ENCODE measurements at regions of chr5 and their contacts with region 1.

Region 1: GRCh38 chr5:172984243-172984953 is 827 bp downstream of the ATP6V0E1 start:
- DNase-seq: peak; percentile 78 to 79
- H3K4me3 ChIP-seq: peak overlapping the region; percentile 94
- H3K4me3 Mint-ChIP-seq: peak overlapping the region; percentile 87
- H3K27ac Mint-ChIP-seq: peak overlapping the region; percentile 95
- H3K4me1 ChIP-seq: peaks cover 11% of the 10 kb centered on the region
- H3K4me1 Mint-ChIP-seq: peaks cover 7% of the 10 kb centered on the region
- H3K27me3 ChIP-seq: no peaks in the 10 kb centered on the region
- H3K27me3 Mint-ChIP-seq: no peaks in the 10 kb centered on the region
- CTCF ChIP-seq: peak; percentile 33 to 72

Region 2: GRCh38 chr5:172412724-172413286 is 571.6 kb before region 1 on chr5:
- CTCF ChIA-PET with region 1: no interaction called
- POLR2A ChIA-PET with region 1: no interaction called
- intact Hi-C with region 1: no loop called
- DNase-seq: no peak
- H3K4me3 ChIP-seq: no peak overlapping the region
- H3K4me3 Mint-ChIP-seq: no peak overlapping the region
- H3K27ac Mint-ChIP-seq: no peak overlapping the region
- H3K4me1 ChIP-seq: no peaks in the 10 kb centered on the region
- H3K4me1 Mint-ChIP-seq: no peaks in the 10 kb centered on the region
- H3K27me3 ChIP-seq: no peaks in the 10 kb centered on the region
- H3K27me3 Mint-ChIP-seq: no peaks in the 10 kb centered on the region
- CTCF ChIP-seq: no peak

Region 3: DNA sequence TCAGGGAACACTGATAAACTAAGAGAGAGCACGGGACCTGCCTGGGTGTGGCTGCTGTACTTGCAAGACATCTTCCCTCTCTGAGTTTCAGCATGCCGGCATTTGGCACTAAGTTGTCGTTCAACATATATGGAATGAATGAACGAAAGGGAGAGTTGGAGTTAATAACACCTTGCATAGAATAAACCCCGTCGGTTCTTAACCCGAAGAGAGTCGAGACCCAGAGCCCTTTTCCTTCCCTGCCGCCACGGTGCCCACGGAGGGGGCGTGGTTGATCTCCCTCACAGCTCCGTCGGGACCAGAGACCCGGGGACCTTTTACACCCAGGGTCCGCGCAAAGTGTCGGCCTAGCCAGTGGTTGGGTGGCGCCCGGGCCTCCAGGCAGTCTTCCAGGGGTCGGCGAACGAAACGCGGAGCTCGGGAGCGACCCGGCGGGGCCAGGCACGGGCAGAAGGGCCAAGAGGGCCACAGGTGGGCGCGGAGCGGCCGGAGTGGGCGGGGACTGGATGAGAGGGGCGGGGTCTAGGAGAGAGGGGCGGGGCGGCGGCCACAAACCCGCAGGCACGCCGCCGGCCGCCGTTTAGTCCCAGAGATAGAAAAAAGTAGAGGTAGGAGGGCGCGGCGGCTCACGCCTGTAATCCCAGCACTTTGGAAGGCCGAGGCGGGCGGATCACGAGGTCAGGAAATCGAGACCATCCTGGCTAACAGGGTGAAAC is 25.9 kb before region 1 on chr5:
- CTCF ChIA-PET with region 1: interaction called, 14 read pairs
- POLR2A ChIA-PET with region 1: interaction called, 9 read pairs
- intact Hi-C with region 1: loop called (anchors 2 kb)
- DNase-seq: peak; percentile 75 to 76
- H3K4me3 ChIP-seq: peak overlapping the region; percentile 96
- H3K4me3 Mint-ChIP-seq: peak overlapping the region; percentile 100
- H3K27ac Mint-ChIP-seq: peak overlapping the region; percentile 98
- H3K4me1 ChIP-seq: peaks cover 15% of the 10 kb centered on the region
- H3K4me1 Mint-ChIP-seq: peaks cover 7% of the 10 kb centered on the region
- H3K27me3 ChIP-seq: no peaks in the 10 kb centered on the region
- H3K27me3 Mint-ChIP-seq: no peaks in the 10 kb centered on the region
- CTCF ChIP-seq: no peak

Region 4: DNA sequence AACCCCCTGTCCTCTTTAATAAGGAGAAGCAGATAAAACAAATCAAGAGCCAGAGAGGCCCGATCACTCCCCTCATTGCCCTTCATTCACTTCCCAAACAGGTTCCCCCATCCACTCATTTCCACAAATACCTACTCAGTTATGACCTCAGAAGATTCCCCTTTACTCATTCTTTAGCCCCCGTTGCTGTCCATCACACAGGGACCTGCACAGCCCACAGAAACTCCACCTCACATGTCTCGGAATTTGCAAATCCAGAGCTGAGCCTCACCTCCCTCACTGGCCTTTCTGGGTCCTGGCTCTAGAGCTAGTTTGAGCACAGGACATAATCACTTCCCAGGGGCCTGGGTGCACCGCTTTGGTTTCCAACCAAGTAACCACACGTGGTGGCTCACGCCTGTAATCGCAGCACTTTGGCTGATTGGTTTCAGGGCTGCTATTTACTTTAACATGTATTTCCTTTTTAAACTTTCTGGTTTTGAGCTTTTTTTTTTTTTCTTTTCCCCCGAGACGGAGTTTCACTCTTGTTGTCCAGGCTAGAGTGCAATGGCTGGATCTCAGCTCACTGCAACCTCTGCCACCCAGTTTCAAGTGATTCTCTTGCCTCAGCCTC is 16.9 kb after region 1 on chr5:
- CTCF ChIA-PET with region 1: no interaction called
- POLR2A ChIA-PET with region 1: no interaction called
- intact Hi-C with region 1: no loop called
- DNase-seq: no peak
- H3K4me3 ChIP-seq: no peak overlapping the region
- H3K4me3 Mint-ChIP-seq: no peak overlapping the region
- H3K27ac Mint-ChIP-seq: no peak overlapping the region
- H3K4me1 ChIP-seq: no peaks in the 10 kb centered on the region
- H3K4me1 Mint-ChIP-seq: peaks cover 10% of the 10 kb centered on the region
- H3K27me3 ChIP-seq: no peaks in the 10 kb centered on the region
- H3K27me3 Mint-ChIP-seq: no peaks in the 10 kb centered on the region
- CTCF ChIP-seq: no peak

Region 5: DNA sequence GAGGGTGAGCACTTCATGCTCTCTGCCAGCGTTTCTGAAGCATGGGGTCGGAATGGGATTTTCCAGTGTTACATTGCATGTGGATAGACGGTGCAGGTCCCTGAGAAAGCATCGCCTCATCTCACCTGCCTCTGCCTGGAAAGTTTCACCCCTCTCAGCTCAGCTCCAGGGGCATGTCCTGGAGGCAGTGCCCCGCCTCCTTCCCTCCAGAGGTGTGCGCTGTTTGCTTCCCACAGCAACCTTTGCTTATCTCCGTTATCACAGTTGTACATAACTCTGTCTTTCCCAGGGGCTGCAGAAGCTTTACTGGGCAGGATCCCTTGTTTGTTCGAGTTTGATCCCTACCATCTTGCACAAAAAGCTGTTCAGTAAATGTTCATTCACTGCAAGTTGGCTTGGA is 61.1 kb after region 1 on chr5:
- CTCF ChIA-PET with region 1: interaction called, 5 read pairs
- POLR2A ChIA-PET with region 1: interaction called, 3 read pairs
- intact Hi-C with region 1: loop called (anchors 2 kb)
- DNase-seq: peak; percentile 86 to 93
- H3K4me3 ChIP-seq: no peak overlapping the region
- H3K4me3 Mint-ChIP-seq: peak overlapping the region; percentile 45
- H3K27ac Mint-ChIP-seq: peak overlapping the region; percentile 88
- H3K4me1 ChIP-seq: peaks cover 56% of the 10 kb centered on the region
- H3K4me1 Mint-ChIP-seq: peaks cover 23% of the 10 kb centered on the region
- H3K27me3 ChIP-seq: no peaks in the 10 kb centered on the region
- H3K27me3 Mint-ChIP-seq: no peaks in the 10 kb centered on the region
- CTCF ChIP-seq: peak in 1 of 2 experiments; percentile 11

Region 6: DNA sequence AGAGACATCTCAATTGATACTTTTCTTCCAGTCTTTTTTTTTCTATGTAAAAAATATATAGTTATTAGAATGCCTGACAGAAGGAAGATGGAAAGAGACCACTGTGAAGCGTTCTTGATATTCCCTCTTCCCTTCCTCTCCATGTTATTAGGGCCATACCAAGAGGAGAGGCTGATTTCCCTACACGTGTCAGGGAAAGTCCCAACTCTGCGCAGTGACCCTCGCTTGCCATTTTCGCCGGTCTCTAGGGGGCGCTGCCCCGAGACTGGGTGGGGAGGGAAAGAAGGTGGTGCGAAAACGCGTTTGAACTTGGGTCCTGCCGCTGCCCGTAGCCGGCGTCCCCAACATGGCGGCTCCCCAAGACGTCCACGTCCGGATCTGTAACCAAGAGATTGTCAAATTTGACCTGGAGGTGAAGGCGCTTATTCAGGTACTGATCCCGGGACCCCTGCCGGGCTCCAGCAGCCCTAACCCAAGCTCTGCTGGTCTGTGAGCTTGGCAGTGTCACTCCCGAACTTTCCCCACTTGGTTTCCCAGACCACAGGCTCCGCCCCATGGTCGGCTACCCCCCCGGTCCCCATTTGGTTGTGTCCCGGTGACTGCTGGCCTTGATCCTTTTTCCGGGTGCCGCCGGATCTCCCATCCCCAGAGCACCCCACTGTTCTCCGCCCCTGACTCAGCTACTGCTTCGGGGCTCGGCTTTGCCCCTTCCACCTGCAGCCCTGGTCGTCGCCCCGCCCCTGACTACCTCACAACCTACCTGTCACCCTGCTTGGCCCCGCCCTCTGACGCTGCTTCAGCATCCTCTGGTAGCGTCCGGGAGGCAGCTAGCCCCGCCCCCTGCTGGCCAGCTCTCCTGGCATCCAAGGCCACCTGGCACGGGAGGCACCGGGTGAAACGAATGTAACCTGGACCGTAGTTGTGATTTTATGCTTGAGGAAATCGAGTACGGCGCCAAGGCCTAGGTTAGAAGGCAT is 160.1 kb after region 1 on chr5 and contains the start of gene BNIP1:
- CTCF ChIA-PET with region 1: interaction called, 21 read pairs
- POLR2A ChIA-PET with region 1: interaction called, 4 read pairs
- intact Hi-C with region 1: loop called (anchors 1 kb)
- DNase-seq: peak; percentile 97 to 99
- H3K4me3 ChIP-seq: peak within 1 kb of the TSS; percentile 86
- H3K4me3 Mint-ChIP-seq: peak within 1 kb of the TSS; percentile 100
- H3K27ac Mint-ChIP-seq: peak within 1 kb of the TSS; percentile 100
- H3K4me1 ChIP-seq: peaks cover 3% of the 10 kb centered on the region; the same call in 1 of the 2 replicates
- H3K4me1 Mint-ChIP-seq: peaks cover 7% of the 10 kb centered on the region
- H3K27me3 ChIP-seq: no peaks in the 10 kb centered on the region
- H3K27me3 Mint-ChIP-seq: no peaks in the 10 kb centered on the region
- CTCF ChIP-seq: peak; percentile 78 to 98
- total RNA-seq, gene BNIP1: 13.9 and 15.3 TPM in 2 replicates